ENCODE measurements at regions of chr1 and their contacts with region 1.

Region 1: GRCh38 chr1:52899445-52899894 is 22.1 kb downstream of the ECHDC2 start:
- DNase-seq: no peak
- CTCF ChIP-seq: no peak

Region 2: GRCh38 chr1:52877554-52877953 is 21.9 kb before region 1 on chr1:
- CTCF ChIA-PET with region 1: interaction called, 10 read pairs
- POLR2A ChIA-PET with region 1: no interaction called
- DNase-seq: no peak
- CTCF ChIP-seq: no peak

Region 3: DNA sequence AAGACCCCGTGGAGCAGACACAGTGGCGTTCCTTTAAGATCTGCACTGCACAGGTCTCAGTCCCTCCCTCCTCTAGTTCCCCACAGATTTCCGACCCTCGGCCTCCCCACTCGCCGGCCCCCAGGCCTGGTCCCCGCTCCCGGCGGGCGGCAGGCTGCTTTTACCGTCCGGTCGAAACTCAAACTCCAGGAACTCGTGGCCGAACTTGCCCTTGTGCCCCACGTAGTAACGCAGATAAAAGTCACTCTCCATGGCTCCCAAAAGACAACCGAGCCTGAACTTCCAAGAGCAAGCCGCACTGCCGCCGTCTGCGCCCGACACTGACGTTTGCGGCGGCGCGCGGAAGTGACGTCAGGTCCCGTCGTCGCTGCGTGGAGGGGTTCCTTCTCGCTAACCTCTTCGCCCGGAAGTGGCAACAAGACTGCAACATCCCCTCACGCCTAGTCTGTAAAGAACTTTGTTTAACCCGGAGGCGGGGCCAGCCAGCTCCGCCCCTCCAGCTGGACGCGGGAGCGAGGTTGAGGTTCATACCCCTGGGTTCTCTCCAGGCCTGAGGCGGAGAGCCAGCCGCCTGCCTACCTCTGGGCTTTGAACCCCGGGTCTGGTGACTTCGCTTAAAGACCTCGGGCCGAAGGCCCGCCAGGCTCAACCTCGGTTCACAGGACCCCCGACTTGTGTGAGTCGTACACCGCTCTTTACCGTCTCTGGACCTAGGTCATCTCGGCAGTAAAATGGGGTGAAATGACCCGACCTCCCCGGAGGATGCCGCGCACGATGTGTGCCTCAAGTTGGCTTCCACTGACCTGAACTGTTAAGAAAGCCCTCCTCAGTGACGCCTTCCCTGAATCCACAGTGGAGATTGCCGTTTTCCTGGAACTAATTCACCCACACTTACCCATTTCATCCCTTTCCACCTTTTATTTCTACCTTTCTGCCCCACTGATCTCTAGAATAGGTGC is 339.0 kb after region 1 on chr1 and contains the start of gene MAGOH:
- CTCF ChIA-PET with region 1: no interaction called
- POLR2A ChIA-PET with region 1: no interaction called
- DNase-seq: peak; percentile 98
- CTCF ChIP-seq: no peak